Astrocyte of the cerebellum (primary cell): ENCODE measurements at regions of chr16 and their contacts with region 1.

Region 1: GRCh38 chr16:23435500-23435899 is 17.5 kb downstream of the COG7 start:
- DNase-seq: no peak
- H3K4me3 ChIP-seq: no peak overlapping the region
- CTCF ChIP-seq: peak; percentile 94

Region 2: GRCh38 chr16:23182460-23183309 is 252.8 kb before region 1 on chr16 and contains the start of gene SCNN1G:
- in situ Hi-C with region 1: loop called (anchors 25 kb)
- DNase-seq: no peak
- H3K4me3 ChIP-seq: peak within 1 kb of the TSS; percentile 26
- CTCF ChIP-seq: peak; percentile 64